ENCODE measurements at regions of chr11 and their contacts with region 1.

Region 1: DNA sequence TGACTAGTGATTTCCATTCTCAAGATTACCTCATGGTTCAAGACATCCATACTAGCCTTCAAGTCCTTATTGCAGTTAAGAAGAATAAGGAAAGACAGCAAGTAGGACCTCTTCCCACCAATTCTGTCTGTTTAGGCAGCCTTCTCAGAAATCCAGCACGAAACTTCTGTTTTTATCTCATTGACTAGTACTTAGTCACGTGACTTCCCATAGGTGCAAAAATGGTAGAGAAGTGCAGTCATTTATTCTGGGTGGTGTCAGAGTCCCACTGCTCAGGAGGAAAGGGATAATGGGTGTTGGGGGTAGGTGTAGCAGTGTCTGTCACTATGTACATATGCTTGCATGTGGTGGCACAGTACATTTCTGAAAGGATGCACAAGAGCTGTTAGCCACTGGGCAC is 57.7 kb upstream of the SORL1-AS1 start:
- DNase-seq: no peak
- ATAC-seq: no peak
- H3K4me3 ChIP-seq: no peak overlapping the region
- H3K4me3 Mint-ChIP-seq: no peak overlapping the region
- H3K27ac ChIP-seq: no peak overlapping the region
- H3K27ac Mint-ChIP-seq: peak overlapping the region in 8 of 9 donors; percentile 1 to 77 (median 51)
- H3K4me1 ChIP-seq: peaks cover 6 to 19% of the 10 kb centered on the region in 2 donors
- H3K4me1 Mint-ChIP-seq: peaks cover 36 to 92% (median 83%) of the 10 kb centered on the region in 7 donors
- H3K27me3 ChIP-seq: no peaks in the 10 kb centered on the region
- H3K27me3 Mint-ChIP-seq: no peaks in the 10 kb centered on the region

Region 2: GRCh38 chr11:121464352-121464946 is 46.0 kb before region 1 on chr11:
- CTCF ChIA-PET with region 1: no interaction called
- POLR2A ChIA-PET with region 1: no interaction called
- intact Hi-C with region 1: no loop called
- DNase-seq: peak in 7 of 9 donors; percentile 29 to 83 (median 45)
- ATAC-seq: peak; percentile 66
- H3K4me3 ChIP-seq: peak overlapping the region; percentile 23
- H3K4me3 Mint-ChIP-seq: peak overlapping the region; percentile 50 to 99 (median 80)
- H3K27ac ChIP-seq: peak overlapping the region; percentile 77
- H3K27ac Mint-ChIP-seq: peak overlapping the region; percentile 85 to 99 (median 92)
- H3K4me1 ChIP-seq: peaks cover 97 to 99% of the 10 kb centered on the region in 2 donors
- H3K4me1 Mint-ChIP-seq: peaks cover 92 to 100% (median 96%) of the 10 kb centered on the region in 7 donors
- H3K27me3 ChIP-seq: no peaks in the 10 kb centered on the region
- H3K27me3 Mint-ChIP-seq: no peaks in the 10 kb centered on the region

Region 3: DNA sequence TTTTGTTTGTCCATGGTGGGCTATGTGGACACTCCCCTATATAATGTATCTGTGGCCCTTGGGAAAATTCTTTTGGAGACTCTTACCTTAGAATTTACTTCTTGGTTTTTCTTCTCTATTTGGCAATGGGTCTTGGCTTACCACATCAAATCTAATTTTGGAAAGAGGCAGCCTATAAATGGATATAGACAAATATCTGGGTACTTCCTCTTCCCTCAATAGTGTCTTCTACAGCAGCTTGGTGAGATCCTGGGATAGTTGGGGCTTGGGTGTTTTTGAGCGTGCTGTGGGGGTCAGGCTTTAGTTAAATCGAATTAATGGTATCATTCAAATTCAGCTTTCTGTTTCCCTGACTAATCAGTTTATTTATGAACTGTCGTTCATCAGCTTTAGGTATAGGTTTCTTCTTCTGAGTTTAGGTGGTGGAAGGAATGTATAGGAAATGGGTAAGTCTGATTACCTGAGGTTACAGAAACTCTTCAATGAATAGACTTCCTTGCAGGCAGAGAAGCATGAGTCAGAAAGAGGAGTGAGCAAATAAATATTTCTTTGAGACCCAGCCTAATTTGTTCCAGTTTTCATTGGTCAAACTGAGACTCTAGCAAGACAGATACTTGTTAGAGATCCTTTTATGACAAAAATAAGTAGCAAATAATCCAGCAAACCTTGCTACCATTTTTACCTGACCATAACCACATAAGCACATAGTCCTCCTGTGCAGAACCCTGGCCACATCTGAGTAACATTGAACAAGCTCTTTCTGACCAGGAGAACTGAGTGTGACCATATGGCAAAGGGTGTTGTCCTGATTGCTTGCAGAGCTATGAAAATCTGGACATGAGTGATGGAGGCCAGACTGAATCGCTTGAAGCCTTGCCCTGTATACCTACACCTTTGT is 11.0 kb after region 1 on chr11:
- CTCF ChIA-PET with region 1: no interaction called
- POLR2A ChIA-PET with region 1: interaction called, 3 read pairs
- intact Hi-C with region 1: loop called in 1 of 2 experiments (anchors 2 kb)
- DNase-seq: no peak
- ATAC-seq: no peak
- H3K4me3 ChIP-seq: no peak overlapping the region
- H3K4me3 Mint-ChIP-seq: no peak overlapping the region
- H3K27ac ChIP-seq: peak overlapping the region; percentile 32
- H3K27ac Mint-ChIP-seq: peak overlapping the region; percentile 12 to 84 (median 49)
- H3K4me1 ChIP-seq: peaks cover 0 to 2% of the 10 kb centered on the region in 2 donors
- H3K4me1 Mint-ChIP-seq: peaks cover 25 to 53% (median 41%) of the 10 kb centered on the region in 7 donors
- H3K27me3 ChIP-seq: no peaks in the 10 kb centered on the region
- H3K27me3 Mint-ChIP-seq: no peaks in the 10 kb centered on the region

Region 4: DNA sequence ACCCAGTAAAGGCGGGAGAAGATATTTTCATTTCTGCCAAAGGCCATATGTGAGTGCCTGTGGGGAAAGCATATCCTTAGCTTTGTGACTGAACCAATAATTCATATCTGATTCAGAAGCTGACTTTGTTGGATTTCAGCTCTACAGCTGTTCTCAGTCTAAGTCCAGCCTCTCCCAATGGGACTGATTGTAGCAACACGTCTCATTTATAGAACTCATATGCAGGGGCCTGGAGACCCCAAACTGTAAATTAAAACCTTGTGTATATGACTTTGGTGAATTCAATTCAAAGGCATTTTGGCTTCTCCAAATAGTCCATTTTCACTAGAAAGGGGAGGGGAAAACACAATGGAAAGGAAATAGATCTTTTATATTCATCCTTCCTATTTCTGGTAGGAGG is 192.8 kb after region 1 on chr11:
- CTCF ChIA-PET with region 1: no interaction called
- POLR2A ChIA-PET with region 1: no interaction called
- intact Hi-C with region 1: no loop called
- DNase-seq: no peak
- ATAC-seq: no peak
- H3K4me3 ChIP-seq: no peak overlapping the region
- H3K4me3 Mint-ChIP-seq: no peak overlapping the region
- H3K27ac ChIP-seq: no peak overlapping the region
- H3K27ac Mint-ChIP-seq: no peak overlapping the region
- H3K4me1 ChIP-seq: no peaks in the 10 kb centered on the region
- H3K4me1 Mint-ChIP-seq: no peaks in the 10 kb centered on the region
- H3K27me3 ChIP-seq: no peaks in the 10 kb centered on the region
- H3K27me3 Mint-ChIP-seq: peaks cover 8 to 31% (median 17%) of the 10 kb centered on the region in 5 donors

Region 5: DNA sequence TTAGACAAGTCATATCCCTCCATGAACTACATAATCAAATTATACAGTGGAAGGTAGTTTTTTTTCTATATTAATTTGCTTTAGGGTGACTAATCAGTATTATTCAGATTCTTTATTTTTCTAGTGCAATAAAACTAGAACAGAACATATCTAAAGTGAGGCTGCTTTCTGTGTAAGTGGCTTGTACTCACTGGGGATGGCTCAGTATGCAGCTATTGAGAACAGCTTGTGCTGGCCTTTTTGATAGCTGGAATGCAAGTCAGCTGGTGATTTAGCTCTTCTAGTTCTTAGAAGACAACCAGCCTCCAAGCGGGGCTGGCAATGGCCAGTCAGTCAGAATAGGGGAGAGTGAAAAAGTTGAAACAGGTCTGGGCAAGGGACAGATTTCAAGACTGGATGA is 486.1 kb after region 1 on chr11:
- CTCF ChIA-PET with region 1: no interaction called
- POLR2A ChIA-PET with region 1: no interaction called
- intact Hi-C with region 1: no loop called
- DNase-seq: no peak
- ATAC-seq: no peak
- H3K4me3 ChIP-seq: no peak overlapping the region
- H3K4me3 Mint-ChIP-seq: no peak overlapping the region
- H3K27ac ChIP-seq: no peak overlapping the region
- H3K27ac Mint-ChIP-seq: no peak overlapping the region
- H3K4me1 ChIP-seq: no peaks in the 10 kb centered on the region
- H3K4me1 Mint-ChIP-seq: peaks cover 0 to 1% (median 0%) of the 10 kb centered on the region in 7 donors
- H3K27me3 ChIP-seq: no peaks in the 10 kb centered on the region
- H3K27me3 Mint-ChIP-seq: peaks cover 0 to 9% (median 2%) of the 10 kb centered on the region in 5 donors

Measured in naive thymus-derived CD4-positive, alpha-beta T cell (primary cell).